Spleen (tissue), 13 donors: ENCODE measurements at regions of chr17 and their contacts with region 1.

Region 1: DNA sequence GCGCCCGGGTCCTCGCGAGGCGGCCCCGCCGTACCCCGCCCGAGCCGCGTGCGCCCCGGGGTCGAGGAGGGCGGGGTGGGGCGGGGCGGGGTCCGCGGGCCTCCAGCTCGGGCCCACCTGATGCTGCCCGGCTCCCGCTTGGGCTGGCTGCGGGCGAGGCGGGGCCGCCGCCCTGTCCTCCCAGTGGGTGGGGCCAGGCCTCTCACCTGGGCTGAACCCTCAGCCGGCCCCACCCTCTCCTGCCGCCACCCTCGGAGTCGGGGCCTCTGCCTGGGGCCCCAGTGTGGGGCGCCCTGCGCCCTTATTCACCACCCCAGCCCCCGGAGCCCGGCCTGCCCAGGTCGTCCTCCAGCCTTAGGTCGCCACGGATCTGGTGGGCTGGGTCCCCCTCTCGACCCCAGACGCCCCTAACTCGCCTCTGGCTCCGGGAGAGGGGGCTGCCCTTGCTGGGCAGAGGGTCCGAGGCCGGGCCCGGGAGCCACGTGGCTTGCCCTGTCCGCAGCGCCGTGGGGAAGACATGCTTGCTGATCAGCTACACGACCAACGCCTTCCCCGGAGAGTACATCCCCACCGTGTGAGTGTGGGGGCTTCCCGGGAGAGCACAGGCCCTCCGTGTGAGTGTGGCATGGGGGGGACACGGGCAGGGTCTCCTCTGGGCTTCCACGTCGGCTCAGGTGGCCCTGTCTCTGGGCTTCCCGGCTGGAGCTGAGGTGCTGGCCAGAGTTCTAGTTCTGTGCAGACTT is 578 bp downstream of the RAC3 start:
- DNase-seq: no peak
- H3K4me3 ChIP-seq: peak overlapping the region in 5 of 8 donors; percentile 17 to 80 (median 27)
- H3K27ac ChIP-seq: no peak overlapping the region
- H3K4me1 ChIP-seq: peaks cover 16 to 50% (median 36%) of the 10 kb centered on the region in 6 donors
- H3K27me3 ChIP-seq: peaks cover 0 to 24% (median 7%) of the 10 kb centered on the region in 7 donors
- CTCF ChIP-seq: no peak
- POLR2A ChIP-seq: no peak

Region 2: GRCh38 chr17:82153745-82154375 is 121.8 kb after region 1 on chr17:
- intact Hi-C with region 1: loop called (anchors 2 kb)
- DNase-seq: peak; percentile 95
- H3K4me3 ChIP-seq: no peak overlapping the region
- H3K27ac ChIP-seq: no peak overlapping the region
- H3K4me1 ChIP-seq: peaks cover 0 to 15% (median 8%) of the 10 kb centered on the region in 6 donors
- H3K27me3 ChIP-seq: no peaks in the 10 kb centered on the region
- CTCF ChIP-seq: peak; percentile 89 to 98 (median 96)
- POLR2A ChIP-seq: no peak